Mammary epithelial cell (primary cell): ENCODE measurements at regions of chr15 and their contacts with region 1.

Region 1: GRCh38 chr15:51992976-51993375 is 21.4 kb upstream of the LEO1 start:
- DNase-seq: peak; percentile 64
- H3K4me3 ChIP-seq: no peak overlapping the region
- H3K27ac ChIP-seq: no peak overlapping the region
- H3K4me1 ChIP-seq: peaks cover 32% of the 10 kb centered on the region
- H3K27me3 ChIP-seq: no peaks in the 10 kb centered on the region
- CTCF ChIP-seq: no peak

Region 2: DNA sequence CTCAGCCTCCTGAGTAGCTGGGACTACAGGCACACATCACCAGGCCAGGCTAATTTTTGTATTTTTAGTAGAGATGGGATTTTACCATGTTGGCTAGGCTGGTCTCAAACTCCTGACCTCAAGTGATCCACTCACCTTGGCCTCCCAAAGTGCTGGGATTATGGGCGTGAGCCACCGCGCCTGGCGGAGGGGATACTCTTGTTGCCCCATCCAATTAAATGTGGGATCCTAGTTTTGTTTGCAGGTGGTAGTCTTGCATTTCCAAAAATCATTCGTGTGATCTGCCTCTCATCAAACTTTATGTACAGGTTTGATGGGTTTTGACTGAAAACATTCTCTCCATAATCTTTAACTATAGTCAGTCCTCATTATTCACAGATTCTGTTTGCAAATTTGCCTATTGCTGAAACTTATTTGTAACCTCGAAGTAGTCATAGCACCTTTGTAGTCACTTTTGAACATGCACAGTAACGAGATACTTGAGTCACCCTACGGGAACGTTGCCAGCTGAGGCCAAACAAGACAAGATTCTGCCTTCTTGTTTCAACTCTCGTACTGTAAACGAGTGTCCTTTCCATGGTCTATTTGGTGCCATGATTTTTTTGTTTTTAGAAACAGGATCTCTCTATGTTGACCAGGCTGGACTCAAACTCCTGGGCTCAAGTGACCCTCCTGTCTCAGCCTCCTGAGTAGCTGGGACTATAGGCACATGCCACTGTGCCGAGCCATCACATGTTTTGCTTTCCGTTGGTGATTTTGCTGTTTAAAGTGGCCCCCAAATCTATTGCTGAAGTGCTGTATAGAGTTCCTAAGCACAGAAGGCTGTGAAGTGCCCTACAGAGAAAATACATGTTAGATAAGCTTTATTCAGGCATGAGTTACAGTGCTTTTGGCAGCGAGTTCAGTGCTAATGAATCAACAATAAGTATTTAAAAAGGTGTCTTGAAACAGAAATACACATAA is 17.9 kb after region 1 on chr15:
- CTCF ChIA-PET with region 1: no interaction called
- dilution Hi-C with region 1: no loop called
- in situ Hi-C with region 1: no loop called
- intact Hi-C with region 1: loop called (anchors 2 kb)
- DNase-seq: peak; percentile 94
- H3K4me3 ChIP-seq: no peak overlapping the region
- H3K27ac ChIP-seq: peak overlapping the region; percentile 58
- H3K4me1 ChIP-seq: peaks cover 46% of the 10 kb centered on the region
- H3K27me3 ChIP-seq: no peaks in the 10 kb centered on the region
- CTCF ChIP-seq: no peak

Region 3: DNA sequence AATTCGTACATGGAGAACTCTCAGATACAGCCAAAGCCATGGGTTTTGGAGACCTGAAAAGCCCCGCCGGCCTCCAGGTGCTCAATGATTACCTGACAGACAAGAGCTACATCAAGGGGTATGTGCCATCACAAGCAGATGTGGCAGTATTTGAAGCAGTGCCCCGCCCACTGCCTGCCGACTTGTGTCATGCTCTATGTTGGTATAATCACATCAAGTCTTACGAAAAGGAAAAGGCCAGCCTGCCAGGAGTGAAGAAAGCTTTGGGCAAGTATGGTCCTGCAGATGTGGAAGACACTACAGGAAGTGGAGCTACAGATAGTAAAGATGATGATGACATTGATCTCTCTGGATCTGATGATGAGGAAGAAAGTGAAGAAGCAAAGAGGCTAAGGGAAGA is 512.2 kb after region 1 on chr15:
- CTCF ChIA-PET with region 1: no interaction called
- dilution Hi-C with region 1: no loop called
- in situ Hi-C with region 1: no loop called
- intact Hi-C with region 1: no loop called
- DNase-seq: peak; percentile 66
- H3K4me3 ChIP-seq: no peak overlapping the region
- H3K27ac ChIP-seq: peak overlapping the region; percentile 7
- H3K4me1 ChIP-seq: peaks cover 21% of the 10 kb centered on the region
- H3K27me3 ChIP-seq: no peaks in the 10 kb centered on the region
- CTCF ChIP-seq: no peak